Activated CD4-positive, alpha-beta T cell treated with anti-CD3 and anti-CD28 coated beads, Interleukin-2, amount 10 ng/mL, durations not matched to agents 24 days and 14 days (primary cell): ENCODE measurements at regions of chr3 and their contacts with region 1.

Region 1: GRCh38 chr3:149273096-149273751 is 51.6 kb upstream of the CP start:
- DNase-seq: peak; percentile 81
- H3K4me3 Mint-ChIP-seq: no peak overlapping the region
- H3K27ac Mint-ChIP-seq: no peak overlapping the region
- H3K4me1 Mint-ChIP-seq: peaks cover 12% of the 10 kb centered on the region
- H3K27me3 Mint-ChIP-seq: peaks cover 17% of the 10 kb centered on the region

Region 2: DNA sequence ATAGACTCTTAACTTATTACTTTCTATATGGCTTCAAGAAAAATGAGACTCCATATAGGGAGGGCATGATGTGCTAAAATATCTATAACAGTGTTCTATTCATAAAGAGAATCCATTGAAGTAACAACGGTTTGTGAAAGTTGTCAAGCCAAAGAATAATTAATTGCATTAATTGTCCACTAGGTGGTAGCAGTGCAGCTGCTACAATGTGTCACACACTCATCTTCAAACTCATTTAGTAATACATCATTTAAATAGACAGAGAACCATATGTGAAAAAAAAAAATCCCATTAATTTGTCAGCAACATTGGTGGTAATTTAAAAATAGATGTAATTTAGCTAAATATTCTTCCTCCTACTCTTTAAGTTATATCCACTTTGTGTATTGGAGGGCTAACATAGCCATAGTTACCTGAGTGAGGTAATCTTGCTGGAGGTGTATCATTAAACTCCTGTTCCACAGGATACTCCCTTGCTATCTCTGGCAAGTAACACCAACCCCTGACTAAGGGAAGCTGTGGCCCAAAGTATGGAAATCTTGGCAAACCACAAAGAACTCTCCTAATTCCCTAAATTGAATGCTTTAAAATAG is 411.9 kb before region 1 on chr3:
- intact Hi-C with region 1: loop called (anchors 5 kb)
- DNase-seq: no peak
- H3K4me3 Mint-ChIP-seq: no peak overlapping the region
- H3K27ac Mint-ChIP-seq: no peak overlapping the region
- H3K4me1 Mint-ChIP-seq: no peaks in the 10 kb centered on the region
- H3K27me3 Mint-ChIP-seq: peaks cover 15% of the 10 kb centered on the region

Region 3: DNA sequence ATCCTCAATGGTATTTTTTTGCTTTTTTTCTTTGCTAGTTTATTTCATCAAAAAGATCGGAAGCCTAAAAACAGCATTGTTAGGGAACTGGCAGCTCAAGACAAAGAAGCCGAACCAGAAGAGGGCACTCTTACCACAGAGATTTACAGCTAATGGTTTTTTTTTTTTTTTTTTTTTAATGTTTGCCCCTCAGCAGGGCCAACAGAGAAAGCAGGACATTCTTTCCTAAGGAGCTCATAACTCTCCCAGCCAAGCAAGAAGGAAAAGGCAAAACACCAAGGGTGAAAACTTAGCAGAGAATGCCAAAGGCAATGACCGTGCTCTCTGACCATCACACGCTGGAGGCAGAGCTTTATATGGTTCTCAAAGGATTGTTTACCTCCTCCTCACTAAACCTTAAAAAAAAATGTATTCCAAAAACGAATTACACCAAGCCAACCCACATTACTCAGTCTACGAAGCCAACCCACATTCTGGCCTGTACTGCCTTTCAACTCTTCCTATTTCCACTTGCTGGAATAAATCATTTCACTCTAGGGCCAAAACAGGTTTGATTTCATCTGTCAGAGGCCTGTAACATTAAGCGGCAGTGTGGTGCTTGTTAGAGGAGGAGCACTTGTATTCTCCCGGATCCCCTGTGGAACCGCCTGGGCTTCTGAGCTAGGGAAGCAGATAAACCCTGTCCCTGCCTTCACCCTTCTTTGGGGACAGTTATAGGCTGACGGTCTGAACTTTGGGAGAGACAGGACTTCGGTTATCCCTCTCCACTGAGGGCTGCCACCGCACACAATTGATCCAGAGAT is 317.5 kb before region 1 on chr3:
- intact Hi-C with region 1: loop called (anchors 1 kb)
- DNase-seq: peak; percentile 76
- H3K4me3 Mint-ChIP-seq: no peak overlapping the region
- H3K27ac Mint-ChIP-seq: no peak overlapping the region
- H3K4me1 Mint-ChIP-seq: peaks cover 5% of the 10 kb centered on the region
- H3K27me3 Mint-ChIP-seq: peaks cover 15% of the 10 kb centered on the region

Region 4: DNA sequence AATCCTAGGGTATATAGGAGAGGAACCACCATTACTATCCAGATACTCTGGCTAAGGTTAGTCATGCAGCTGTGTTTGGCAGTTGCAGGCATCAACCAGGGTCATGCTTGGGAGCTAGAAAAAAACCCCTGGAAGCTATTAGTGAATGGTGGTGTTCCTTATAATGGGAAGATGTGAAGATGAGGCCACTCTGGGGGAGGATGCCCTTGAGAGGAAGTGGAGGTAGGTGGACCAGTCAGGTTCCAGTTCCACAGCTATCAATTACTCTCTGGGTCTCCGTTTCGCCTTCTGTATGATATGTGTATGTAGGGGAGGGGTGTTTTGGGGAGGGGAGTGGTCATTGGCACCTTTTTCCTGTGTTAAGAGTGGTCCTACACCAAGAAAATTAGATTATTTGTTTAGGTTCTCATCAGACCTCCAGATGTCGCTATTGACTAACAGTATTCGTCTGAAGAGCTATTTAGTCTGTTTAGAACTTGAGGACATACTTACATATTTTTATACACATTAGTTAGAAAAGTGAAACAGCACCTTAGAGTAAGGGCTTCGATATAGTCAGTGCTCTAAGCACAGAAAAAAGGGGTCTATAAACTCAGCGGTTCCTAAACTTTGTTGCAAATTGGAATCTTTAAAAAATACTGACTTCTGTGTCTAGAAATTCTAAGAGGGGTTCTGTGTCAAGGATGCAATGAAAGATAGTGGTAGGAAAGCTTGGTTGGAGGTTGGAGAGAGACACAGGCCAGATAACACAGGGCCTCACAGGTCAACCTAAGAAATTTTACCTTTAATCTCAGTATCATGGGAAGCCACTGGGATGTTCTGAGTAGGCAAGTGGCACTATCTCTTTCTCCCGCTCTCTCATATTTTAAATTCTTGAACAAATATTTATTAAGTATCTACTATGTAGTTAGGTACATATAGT is 152.9 kb before region 1 on chr3:
- intact Hi-C with region 1: loop called (anchors 1 kb)
- DNase-seq: peak; percentile 75
- H3K4me3 Mint-ChIP-seq: no peak overlapping the region
- H3K27ac Mint-ChIP-seq: no peak overlapping the region
- H3K4me1 Mint-ChIP-seq: peaks cover 3% of the 10 kb centered on the region
- H3K27me3 Mint-ChIP-seq: peaks cover 10% of the 10 kb centered on the region

Region 5: GRCh38 chr3:149203758-149204157 is 69.5 kb before region 1 on chr3:
- intact Hi-C with region 1: loop called (anchors 5 kb)
- DNase-seq: peak; percentile 66
- H3K4me3 Mint-ChIP-seq: peak overlapping the region; percentile 2
- H3K27ac Mint-ChIP-seq: no peak overlapping the region
- H3K4me1 Mint-ChIP-seq: peaks cover 18% of the 10 kb centered on the region
- H3K27me3 Mint-ChIP-seq: peaks cover 54% of the 10 kb centered on the region